Activated CD4-positive, alpha-beta memory T cell treated with anti-CD3 and anti-CD28 coated beads, Interleukin-2, amount 10 ng/mL, durations not matched to agents 7 days and 5 days (primary cell): ENCODE measurements at regions of chr2 and their contacts with region 1.

Region 1: GRCh38 chr2:55014962-55015939 is 35.0 kb downstream of the RTN4 start:
- DNase-seq: peak; percentile 34
- H3K4me3 Mint-ChIP-seq: no peak overlapping the region
- H3K27ac Mint-ChIP-seq: no peak overlapping the region
- H3K4me1 Mint-ChIP-seq: peaks cover 16% of the 10 kb centered on the region
- H3K27me3 Mint-ChIP-seq: no peaks in the 10 kb centered on the region

Region 2: DNA sequence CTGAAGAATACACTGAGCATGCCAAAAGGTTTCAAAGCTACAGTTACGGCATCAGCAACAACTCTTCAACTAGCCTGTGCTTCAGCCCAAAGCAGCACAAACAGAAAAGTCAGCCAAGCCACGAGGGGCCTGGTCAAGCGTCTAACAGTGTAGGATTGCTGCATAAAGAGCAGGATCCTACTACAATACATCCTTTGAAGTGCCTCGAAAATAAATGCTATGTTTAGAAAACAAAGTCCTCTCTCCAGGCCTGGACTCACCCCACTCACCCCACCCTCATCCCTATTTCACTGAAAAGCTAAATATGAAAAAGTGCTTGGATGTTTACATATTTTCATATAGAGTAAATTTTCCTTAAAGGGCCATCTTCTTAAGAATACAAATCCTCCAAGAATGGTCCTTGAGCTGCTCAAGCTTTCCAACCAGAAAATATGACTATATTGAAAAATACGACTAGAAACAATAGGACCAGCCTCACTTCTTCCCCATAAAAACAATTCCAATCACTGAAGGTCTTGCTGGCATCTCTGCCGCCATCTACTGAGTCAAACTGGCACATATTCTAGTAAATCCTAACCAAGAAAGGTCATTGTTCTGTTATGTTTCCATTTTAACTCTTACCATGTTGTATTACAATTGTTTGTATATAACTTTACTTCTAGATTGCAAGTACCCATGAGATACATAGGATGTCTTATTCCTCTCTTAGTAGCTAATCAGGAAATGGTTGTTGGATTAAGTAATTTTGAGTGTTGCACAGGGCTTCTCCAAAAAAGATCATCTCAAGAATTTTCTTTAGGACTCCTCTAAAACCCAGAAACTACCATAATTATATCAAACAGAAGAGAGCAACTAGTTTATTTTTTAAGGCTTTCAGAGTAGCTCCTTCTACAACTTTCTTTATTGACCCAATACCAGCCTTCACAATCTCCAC is 153.2 kb after region 1 on chr2:
- CTCF ChIA-PET with region 1: interaction called, 24 read pairs
- POLR2A ChIA-PET with region 1: interaction called, 3 read pairs
- DNase-seq: peak; percentile 32
- H3K4me3 Mint-ChIP-seq: no peak overlapping the region
- H3K27ac Mint-ChIP-seq: no peak overlapping the region
- H3K4me1 Mint-ChIP-seq: no peaks in the 10 kb centered on the region
- H3K27me3 Mint-ChIP-seq: no peaks in the 10 kb centered on the region

Region 3: DNA sequence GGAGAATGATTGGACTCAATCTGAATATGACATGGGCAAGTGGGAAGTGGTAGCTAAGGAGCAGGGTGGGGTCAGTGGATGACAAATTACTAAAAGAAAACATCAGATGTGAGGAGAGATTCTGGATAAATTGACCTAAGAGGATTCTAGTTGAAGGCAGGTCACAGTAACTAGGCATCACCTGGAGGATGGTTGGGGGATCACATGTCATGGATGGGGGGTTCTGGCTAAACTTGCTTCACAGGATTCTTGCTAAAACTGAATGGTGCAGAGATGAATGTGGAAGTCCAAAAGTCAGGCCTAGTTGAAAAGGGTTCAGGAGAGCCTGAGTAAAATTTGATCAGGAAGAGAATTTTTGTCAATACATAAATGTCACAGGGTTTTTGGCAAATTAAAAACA is 198.6 kb after region 1 on chr2:
- CTCF ChIA-PET with region 1: no interaction called
- POLR2A ChIA-PET with region 1: no interaction called
- DNase-seq: no peak
- H3K4me3 Mint-ChIP-seq: no peak overlapping the region
- H3K27ac Mint-ChIP-seq: no peak overlapping the region
- H3K4me1 Mint-ChIP-seq: no peaks in the 10 kb centered on the region
- H3K27me3 Mint-ChIP-seq: no peaks in the 10 kb centered on the region